Activated CD8-positive, alpha-beta T cell treated with anti-CD3 and anti-CD28 coated beads for 36 hours (primary cell): ENCODE measurements at regions of chr1 and their contacts with region 1.

Region 1: GRCh38 chr1:205680073-205680851 is at the start of gene SLC45A3:
- DNase-seq: peak; percentile 48
- ATAC-seq: peak; percentile 79
- H3K4me3 Mint-ChIP-seq: peak within 1 kb of the TSS; percentile 72
- H3K27ac Mint-ChIP-seq: no peak within 1 kb of the TSS
- H3K4me1 Mint-ChIP-seq: peaks cover 12% of the 10 kb centered on the region
- H3K27me3 Mint-ChIP-seq: peaks cover 11% of the 10 kb centered on the region
- CTCF ChIP-seq: no peak
- total RNA-seq, gene SLC45A3: 0.38 to 0.65 TPM

Region 2: DNA sequence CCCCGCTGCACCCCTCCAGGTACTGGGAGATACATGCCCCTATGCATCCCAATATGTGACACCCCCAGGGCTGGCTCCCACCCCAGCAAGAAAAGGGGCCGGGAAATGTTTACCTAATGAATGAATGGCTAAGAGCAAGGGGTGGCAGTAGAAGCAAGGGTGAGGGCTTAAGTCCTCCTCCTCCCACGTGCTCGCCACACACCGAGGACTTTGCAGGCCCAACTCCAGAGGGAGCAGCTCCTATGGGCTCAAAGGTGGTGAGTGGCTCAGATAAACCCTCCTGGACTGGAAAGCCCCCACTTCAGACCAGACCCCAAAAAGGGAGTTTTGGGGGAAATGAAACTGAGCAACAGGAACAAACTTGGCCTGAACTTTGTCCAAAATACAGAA is 11.3 kb before region 1 on chr1:
- CTCF ChIA-PET with region 1: interaction called, 10 read pairs
- POLR2A ChIA-PET with region 1: interaction called, 5 read pairs
- intact Hi-C with region 1: no loop called
- DNase-seq: no peak
- ATAC-seq: peak; percentile 31
- H3K4me3 Mint-ChIP-seq: no peak overlapping the region
- H3K27ac Mint-ChIP-seq: no peak overlapping the region
- H3K4me1 Mint-ChIP-seq: peaks cover 7% of the 10 kb centered on the region
- H3K27me3 Mint-ChIP-seq: peaks cover 9% of the 10 kb centered on the region
- CTCF ChIP-seq: no peak